ENCODE measurements at regions of chr1 and their contacts with region 1.

Region 1: DNA sequence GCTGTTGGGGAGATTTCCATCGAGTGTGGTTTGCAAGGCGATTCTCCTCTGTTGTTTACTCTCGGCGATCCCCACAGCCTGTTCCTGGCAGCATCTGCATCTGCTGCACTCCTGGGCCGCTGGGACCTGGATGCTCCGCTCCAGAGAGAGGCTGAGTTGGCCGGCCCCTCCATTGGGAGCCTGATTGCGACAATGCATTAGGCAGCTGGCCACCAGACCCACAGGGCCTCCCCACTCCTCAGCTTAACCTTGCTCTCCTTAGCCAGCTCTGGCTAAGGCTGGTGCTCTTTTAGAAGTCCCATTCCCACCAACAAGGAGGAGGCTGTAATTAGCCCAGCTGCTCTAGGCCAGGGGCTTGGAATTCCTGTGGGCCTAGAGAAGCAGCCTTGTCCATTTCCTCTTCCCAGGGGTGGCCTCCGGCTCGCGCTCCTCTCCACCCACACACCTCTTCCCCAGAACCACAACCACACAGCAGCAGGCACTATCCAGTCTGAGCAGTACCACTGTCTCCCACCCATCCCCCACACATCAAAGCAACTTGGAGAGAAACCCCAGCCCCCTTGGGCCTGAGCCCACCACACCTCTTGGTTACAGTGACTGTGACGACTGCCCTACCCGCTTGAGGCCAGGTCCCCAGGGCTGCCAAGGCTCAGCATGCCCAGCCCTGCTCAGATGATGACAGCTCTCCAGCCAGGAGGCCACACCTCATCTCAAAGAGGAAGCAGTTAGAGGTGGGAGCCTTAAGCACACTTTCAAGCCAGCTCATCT is 193.8 kb upstream of the EDN2 start:
- DNase-seq: no peak
- ATAC-seq: peak; percentile 75
- H3K4me3 Mint-ChIP-seq: no peak overlapping the region
- H3K27ac Mint-ChIP-seq: peak overlapping the region; percentile 44
- H3K4me1 Mint-ChIP-seq: peaks cover 49% of the 10 kb centered on the region
- H3K27me3 Mint-ChIP-seq: no peaks in the 10 kb centered on the region
- CTCF ChIP-seq: no peak

Region 2: DNA sequence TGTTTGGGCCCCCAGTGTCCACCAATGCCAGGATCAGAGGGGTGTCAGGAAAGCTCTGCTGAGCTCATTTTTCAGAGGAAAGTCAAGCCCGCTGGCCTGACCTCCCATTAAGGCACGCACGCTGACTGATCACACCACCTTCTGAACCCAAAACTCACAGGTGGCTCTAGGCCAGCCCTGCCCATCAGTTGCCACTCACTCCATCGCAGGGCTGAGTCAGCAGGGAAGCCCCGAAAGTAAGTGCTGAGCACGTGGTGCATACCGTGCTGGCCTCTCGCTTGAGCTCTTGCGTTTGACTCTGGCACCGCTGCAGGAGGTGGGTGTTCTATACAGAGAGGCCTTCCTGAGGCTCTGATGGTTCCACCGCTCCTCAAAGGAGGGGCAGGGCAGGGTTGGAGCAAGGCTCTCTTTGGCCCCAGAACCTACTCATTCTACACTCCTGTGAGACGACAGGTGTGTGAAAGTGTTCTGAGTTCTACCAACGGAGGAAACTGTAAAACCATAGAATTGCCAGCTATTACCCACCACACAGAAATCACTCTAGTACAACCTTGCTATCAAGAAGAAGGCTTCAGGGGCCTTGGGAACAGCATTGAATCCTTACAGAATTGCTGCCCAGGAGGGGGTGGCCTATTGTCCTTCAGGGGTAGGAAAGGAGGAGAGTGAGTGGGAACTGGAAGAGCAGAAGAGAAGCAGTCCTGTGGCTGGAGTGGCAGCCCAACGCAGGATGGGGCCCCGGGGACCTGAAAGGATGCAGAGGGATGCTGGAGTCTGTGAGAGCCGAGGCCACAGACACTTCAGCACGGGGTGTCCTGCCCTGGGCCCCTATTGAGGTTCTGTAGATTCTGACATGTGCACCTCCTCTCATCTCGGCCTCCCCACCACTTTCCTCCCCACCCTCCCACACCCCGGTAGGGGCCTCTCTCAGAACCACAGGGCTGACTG is 20.9 kb after region 1 on chr1:
- CTCF ChIA-PET with region 1: interaction called, 8 read pairs
- POLR2A ChIA-PET with region 1: interaction called, 3 read pairs
- intact Hi-C with region 1: loop called (anchors 2 kb)
- DNase-seq: peak; percentile 38
- ATAC-seq: peak; percentile 94
- H3K4me3 Mint-ChIP-seq: no peak overlapping the region
- H3K27ac Mint-ChIP-seq: peak overlapping the region; percentile 65
- H3K4me1 Mint-ChIP-seq: peaks cover 13% of the 10 kb centered on the region
- H3K27me3 Mint-ChIP-seq: no peaks in the 10 kb centered on the region
- CTCF ChIP-seq: no peak

Measured in activated B cell treated with CpG ODN at 0.5 μM for 24 hours (primary cell).